ENCODE measurements at regions of chr2 and their contacts with region 1.

Region 1: DNA sequence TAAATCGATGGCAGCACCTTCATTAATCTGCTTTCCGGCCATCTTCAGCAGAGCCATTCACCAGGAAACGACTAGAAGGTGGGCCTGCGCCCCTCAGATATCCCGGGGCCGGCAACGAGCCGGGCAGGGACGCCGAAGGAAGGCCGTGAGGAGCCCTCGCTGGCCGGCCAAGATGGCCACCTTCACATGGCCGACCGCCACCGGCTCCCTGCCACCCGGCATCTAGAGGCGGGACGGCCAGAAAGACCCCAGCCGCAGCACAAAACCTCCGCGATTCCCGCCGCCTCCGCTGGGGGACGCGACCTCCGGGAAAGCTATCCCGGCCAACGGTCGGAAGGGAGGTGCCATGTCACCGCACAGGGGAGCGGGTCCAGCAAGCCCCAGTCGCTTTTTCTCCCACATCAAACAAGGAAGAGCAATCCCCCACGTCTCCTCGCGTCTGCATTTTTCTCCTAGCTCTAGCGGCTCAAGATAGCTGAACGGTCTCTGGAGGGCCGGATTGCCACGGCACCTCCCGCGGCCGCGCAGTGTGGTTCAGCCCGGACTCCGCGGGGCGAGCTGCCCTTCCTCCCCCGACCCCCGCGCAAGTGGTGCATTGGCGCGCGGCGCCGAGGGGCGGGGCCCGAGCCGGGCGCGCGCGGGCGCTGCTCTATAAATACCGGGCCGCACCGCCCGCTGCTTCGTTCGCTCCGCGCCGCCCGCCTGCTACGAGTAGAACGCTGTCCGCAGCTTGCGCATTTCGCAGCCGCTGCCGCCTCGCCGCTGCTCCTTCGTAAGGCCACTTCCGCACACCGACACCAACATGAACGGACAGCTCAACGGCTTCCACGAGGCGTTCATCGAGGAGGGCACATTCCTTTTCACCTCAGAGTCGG is at the start of gene MAT2A:
- DNase-seq: peak; percentile 93 to 97 (median 96)
- H3K4me3 ChIP-seq: peak within 1 kb of the TSS; percentile 61 to 96 (median 85)
- H3K27ac ChIP-seq: peak within 1 kb of the TSS; percentile 98 to 100
- H3K4me1 ChIP-seq: peaks cover 37 to 68% (median 60%) of the 10 kb centered on the region in 4 experiments
- H3K27me3 ChIP-seq: no peaks in the 10 kb centered on the region

Region 2: GRCh38 chr2:85390941-85391669 is 147.6 kb before region 1 on chr2:
- CTCF ChIA-PET with region 1: interaction called, 12 read pairs
- POLR2A ChIA-PET with region 1: interaction called, 5 read pairs
- DNase-seq: peak; percentile 61 to 75 (median 68)
- H3K4me3 ChIP-seq: no peak overlapping the region
- H3K27ac ChIP-seq: no peak overlapping the region
- H3K4me1 ChIP-seq: peaks cover 0 to 5% (median under 1%) of the 10 kb centered on the region in 4 experiments
- H3K27me3 ChIP-seq: no peaks in the 10 kb centered on the region

Region 3: GRCh38 chr2:85420536-85421259 is 118.0 kb before region 1 on chr2:
- CTCF ChIA-PET with region 1: interaction called, 584 read pairs
- POLR2A ChIA-PET with region 1: interaction called, 13 read pairs
- DNase-seq: peak; percentile 80 to 89 (median 86)
- H3K4me3 ChIP-seq: peak overlapping the region in 3 of 7 experiments; percentile 44 to 73 (median 54)
- H3K27ac ChIP-seq: peak overlapping the region in 1 of 2 experiments; percentile 63
- H3K4me1 ChIP-seq: peaks cover 1 to 52% (median 34%) of the 10 kb centered on the region in 4 experiments
- H3K27me3 ChIP-seq: no peaks in the 10 kb centered on the region

Region 4: GRCh38 chr2:85428343-85428881 is 110.3 kb before region 1 on chr2:
- CTCF ChIA-PET with region 1: interaction called, 584 read pairs
- POLR2A ChIA-PET with region 1: interaction called, 10 read pairs
- DNase-seq: peak in 2 of 3 donors; percentile 56 to 63
- H3K4me3 ChIP-seq: no peak overlapping the region
- H3K27ac ChIP-seq: no peak overlapping the region
- H3K4me1 ChIP-seq: peaks cover 6 to 56% (median 33%) of the 10 kb centered on the region in 4 experiments
- H3K27me3 ChIP-seq: no peaks in the 10 kb centered on the region

Region 5: GRCh38 chr2:85437488-85438284 is 101.0 kb before region 1 on chr2:
- CTCF ChIA-PET with region 1: interaction called, 584 read pairs
- POLR2A ChIA-PET with region 1: interaction called, 28 read pairs
- DNase-seq: peak; percentile 92 to 95 (median 95)
- H3K4me3 ChIP-seq: peak overlapping the region in 4 of 7 experiments; percentile 36 to 47 (median 38)
- H3K27ac ChIP-seq: peak overlapping the region; percentile 80 to 90
- H3K4me1 ChIP-seq: peaks cover 3 to 84% (median 66%) of the 10 kb centered on the region in 4 experiments
- H3K27me3 ChIP-seq: no peaks in the 10 kb centered on the region

Region 6: GRCh38 chr2:85524336-85524933 is 14.3 kb before region 1 on chr2:
- CTCF ChIA-PET with region 1: interaction called, 6 read pairs
- POLR2A ChIA-PET with region 1: interaction called, 10 read pairs
- DNase-seq: peak in 2 of 3 donors; percentile 48 to 54
- H3K4me3 ChIP-seq: peak overlapping the region in 2 of 7 experiments; percentile 23 to 28
- H3K27ac ChIP-seq: peak overlapping the region in 1 of 2 experiments; percentile 47
- H3K4me1 ChIP-seq: peaks cover 10 to 22% (median 19%) of the 10 kb centered on the region in 4 experiments
- H3K27me3 ChIP-seq: no peaks in the 10 kb centered on the region

Region 7: DNA sequence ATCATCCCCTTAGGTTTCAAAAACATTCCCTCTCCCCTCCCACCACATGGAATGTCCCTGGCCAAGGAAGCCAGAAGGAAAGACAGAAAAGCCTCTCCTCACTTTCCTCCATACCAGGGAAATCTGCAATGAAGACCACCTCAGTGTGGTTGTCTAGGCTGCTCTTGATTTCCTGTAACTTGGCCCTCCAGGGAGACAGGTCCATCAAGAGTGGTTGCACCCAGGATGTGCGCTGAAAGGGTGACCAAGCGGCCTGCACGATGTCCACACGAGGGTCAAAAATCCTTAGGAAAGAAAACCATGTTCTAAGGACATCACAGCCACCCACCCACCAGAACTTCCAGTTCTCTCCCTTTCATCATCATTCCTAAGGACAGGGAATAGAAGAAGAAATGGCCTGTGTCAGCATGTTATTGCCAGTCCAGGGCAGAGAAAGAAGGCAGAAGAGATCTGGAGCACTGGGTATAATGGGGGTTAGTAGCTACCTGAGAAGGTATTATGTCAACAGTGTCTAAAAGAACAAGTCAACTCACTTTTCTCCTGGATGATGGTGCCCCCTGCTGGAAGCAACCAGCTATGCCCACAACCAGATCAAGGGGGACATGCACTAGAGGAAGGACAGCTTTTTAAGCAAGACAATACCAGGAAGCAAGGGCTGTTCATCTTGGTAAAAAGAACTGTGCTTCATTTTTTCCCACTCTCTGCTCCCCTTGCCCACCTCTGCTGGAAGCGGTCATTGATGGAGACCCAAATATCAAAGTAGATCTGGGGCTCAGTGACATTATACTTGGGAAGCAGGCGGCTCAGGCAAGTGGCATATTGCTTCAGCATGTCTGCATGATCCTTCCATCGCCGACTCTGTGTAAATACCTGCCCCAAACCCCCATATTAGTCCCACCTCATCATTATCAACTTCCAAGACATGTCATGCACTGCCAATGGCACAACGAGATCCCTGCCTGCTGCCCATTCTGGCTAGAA is 13.3 kb after region 1 on chr2:
- CTCF ChIA-PET with region 1: interaction called, 78 read pairs
- POLR2A ChIA-PET with region 1: interaction called, 69 read pairs
- DNase-seq: peak; percentile 86 to 93 (median 88)
- H3K4me3 ChIP-seq: no peak overlapping the region
- H3K27ac ChIP-seq: no peak overlapping the region
- H3K4me1 ChIP-seq: peaks cover 18 to 31% (median 25%) of the 10 kb centered on the region in 4 experiments
- H3K27me3 ChIP-seq: no peaks in the 10 kb centered on the region